Caco-2 (cell line): ENCODE measurements at regions of chr18 and their contacts with region 1.

Region 1: DNA sequence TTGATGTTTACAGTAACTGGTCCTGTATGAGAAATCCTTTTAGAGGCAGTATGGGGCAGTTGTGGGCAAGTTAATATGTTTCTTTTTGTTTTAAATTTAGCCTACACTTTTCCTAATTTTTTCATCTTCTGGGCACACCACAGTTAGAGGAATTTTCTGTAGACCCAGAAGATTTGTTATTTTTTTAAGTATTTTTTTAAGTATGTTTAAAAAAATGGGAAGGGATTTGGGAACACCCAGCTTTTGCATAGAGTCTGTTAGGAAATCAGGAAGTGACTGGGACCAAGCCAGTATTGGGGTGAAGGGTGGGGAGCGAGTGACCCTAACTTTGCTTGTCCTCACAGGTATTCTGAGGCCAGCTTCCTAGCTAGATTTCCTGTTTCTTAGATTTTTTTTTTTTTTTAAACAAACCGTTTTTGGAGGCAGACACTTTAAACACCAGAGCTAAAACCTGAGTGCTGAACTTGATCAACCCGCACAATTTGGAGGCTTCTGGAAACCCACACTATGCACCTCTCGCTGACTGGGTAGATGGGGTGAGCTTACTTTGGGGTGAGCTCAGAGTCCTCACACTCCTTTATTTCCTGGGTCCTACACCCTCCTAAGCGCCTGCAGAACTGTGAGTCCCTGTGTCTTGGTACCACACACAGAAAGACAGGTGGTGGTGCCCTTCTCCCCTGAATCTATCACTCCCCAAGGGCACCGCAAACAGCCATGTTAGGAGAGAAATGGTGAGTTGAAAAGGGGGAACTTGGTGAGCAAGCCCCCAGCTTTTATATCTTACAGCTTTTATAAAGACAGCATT is 5.2 kb downstream of the GATA6 start:
- DNase-seq: no peak
- H3K4me3 ChIP-seq: peak overlapping the region; percentile 69
- H3K4me3 Mint-ChIP-seq: peak overlapping the region; percentile 74
- H3K27ac Mint-ChIP-seq: peak overlapping the region; percentile 49
- H3K4me1 ChIP-seq: peaks cover 42% of the 10 kb centered on the region
- H3K4me1 Mint-ChIP-seq: peaks cover 14% of the 10 kb centered on the region
- H3K27me3 ChIP-seq: no peaks in the 10 kb centered on the region
- H3K27me3 Mint-ChIP-seq: no peaks in the 10 kb centered on the region
- CTCF ChIP-seq: no peak

Region 2: GRCh38 chr18:22088029-22088428 is 86.5 kb before region 1 on chr18:
- CTCF ChIA-PET with region 1: no interaction called
- POLR2A ChIA-PET with region 1: no interaction called
- intact Hi-C with region 1: no loop called
- DNase-seq: no peak
- H3K4me3 ChIP-seq: no peak overlapping the region
- H3K4me3 Mint-ChIP-seq: no peak overlapping the region
- H3K27ac Mint-ChIP-seq: peak overlapping the region; percentile 12
- H3K4me1 ChIP-seq: peaks cover 43% of the 10 kb centered on the region
- H3K4me1 Mint-ChIP-seq: peaks cover 61% of the 10 kb centered on the region
- H3K27me3 ChIP-seq: no peaks in the 10 kb centered on the region
- H3K27me3 Mint-ChIP-seq: no peaks in the 10 kb centered on the region
- CTCF ChIP-seq: no peak

Region 3: GRCh38 chr18:22465859-22466457 is 291.4 kb after region 1 on chr18:
- CTCF ChIA-PET with region 1: no interaction called
- POLR2A ChIA-PET with region 1: interaction called, 3 read pairs
- intact Hi-C with region 1: loop called (anchors 2 kb)
- DNase-seq: peak; percentile 80 to 84
- H3K4me3 ChIP-seq: no peak overlapping the region
- H3K4me3 Mint-ChIP-seq: peak overlapping the region; percentile 64
- H3K27ac Mint-ChIP-seq: peak overlapping the region; percentile 99
- H3K4me1 ChIP-seq: peaks cover 62% of the 10 kb centered on the region
- H3K4me1 Mint-ChIP-seq: peaks cover 50% of the 10 kb centered on the region
- H3K27me3 ChIP-seq: no peaks in the 10 kb centered on the region
- H3K27me3 Mint-ChIP-seq: no peaks in the 10 kb centered on the region
- CTCF ChIP-seq: no peak